ENCODE measurements at regions of chr7 and their contacts with region 1.

Region 1: DNA sequence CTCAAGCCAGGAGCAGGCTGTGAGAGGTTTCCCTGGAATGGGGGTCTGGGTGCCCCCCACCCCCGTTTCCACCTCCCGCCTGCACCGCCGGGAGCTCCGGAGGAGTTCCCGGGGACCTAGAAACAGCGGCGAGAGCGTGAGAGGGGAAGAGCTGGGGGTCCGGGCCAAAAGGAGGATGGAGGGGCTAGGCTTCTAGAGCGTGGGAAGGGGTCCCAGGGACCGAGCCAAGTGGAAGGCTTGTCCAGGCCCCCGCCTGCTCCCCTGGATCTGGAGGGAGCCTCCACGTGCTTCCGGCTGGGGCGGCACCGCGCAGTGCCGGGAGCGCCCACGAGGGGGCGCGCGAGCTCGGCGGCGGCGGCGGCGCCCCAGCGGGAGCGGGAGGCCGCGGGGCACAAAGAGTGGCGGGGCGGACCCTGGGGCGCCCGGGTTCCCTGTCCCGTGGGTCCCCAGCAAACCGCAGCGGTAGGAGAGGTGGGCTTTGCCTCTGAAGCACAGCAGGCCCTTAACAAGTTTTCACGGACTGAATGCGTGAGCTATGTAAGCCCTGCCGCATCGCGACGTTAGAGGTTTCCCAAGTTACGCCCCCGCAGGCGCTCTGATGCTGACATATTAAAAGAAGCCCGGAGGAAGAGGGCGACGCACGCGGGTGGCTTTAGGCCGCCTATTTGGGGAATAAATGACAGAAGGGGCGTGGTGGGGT is 104.4 kb upstream of the LRRC4 start:
- DNase-seq: peak in 41 of 42 donors; percentile 22 to 84 (median 65)

Region 2: DNA sequence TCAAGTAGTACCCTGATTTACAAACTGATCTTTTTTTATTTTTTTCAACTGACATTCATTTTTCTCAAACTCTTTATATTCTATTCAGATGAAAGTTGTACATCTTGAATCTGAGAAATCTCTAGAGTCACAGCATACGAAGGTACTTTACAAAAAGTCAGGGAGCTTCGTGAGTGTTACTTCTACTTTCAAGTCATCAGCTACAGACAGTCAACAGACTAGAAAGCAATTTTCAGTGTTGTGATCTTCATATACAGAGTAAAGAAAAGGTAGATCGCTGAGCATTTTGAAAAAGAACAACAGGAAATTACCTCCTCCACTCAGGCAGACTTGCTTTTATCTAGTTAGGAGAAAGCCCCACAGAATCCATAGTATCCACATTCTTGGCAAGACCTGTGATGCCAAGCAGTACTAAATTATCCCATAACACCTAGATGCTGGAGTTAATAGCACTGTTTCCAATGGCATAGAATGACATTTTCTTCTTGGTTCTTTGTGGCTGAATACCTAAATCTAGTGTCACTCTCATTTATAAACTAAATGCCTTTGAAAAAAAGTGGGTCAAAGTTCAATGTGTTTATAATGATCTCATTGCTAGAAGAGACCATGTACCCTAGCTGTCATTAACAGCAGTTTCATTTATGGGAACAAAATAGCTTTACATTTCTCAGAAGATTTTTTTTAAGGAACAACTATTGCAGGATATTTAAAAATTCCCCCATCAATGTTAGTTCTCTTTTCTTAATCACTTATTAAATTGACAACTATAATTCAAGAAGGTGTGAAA is 731.2 kb before region 1 on chr7:
- intact Hi-C with region 1: no loop called
- DNase-seq: no peak

Region 3: DNA sequence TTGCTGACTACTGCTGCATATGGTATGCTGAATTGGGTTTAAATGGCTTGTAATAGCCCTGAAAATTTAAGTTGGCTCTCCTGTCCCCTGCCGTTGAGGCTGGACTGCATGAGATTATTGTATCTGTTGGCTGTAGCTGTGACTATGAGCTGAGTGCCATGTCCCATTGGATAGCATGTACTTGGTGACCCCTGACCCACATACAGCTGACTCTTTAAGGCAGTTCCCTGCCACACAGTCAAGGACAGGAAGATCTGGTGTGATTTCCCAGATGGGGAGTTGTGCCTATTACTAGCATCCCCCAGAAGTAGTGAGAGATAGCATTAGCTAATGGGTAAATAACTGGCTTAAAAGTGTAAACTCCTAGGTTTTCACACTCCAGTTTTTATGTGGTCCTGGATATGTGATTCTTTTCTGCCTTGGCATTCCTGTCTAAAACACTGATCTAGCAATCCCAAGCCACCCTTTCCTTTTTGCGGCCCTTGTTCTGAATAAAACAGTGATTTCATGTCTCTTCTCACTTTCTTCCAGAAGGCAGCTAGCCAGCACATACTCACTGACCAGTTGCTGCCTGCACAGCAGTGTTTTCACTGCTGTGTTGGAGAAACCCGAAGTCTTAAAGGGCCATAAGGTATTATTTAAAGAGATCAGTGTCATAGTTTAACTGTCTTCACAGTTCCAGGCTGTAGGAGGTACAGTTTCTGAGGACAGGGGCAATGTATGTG is 140.3 kb before region 1 on chr7:
- intact Hi-C with region 1: no loop called
- DNase-seq: peak in 2 of 42 donors; percentile 44 to 60

Region 4: GRCh38 chr7:128031901-128032604 is 103.6 kb before region 1 on chr7:
- intact Hi-C with region 1: loop called (anchors 5 kb)
- DNase-seq: peak in 38 of 42 donors; percentile 42 to 84 (median 63)

Measured in head of caudate nucleus (tissue), 42 donors.